AG04450 (cell line): ENCODE measurements at regions of chr17 and their contacts with region 1.

Region 1: GRCh38 chr17:75109407-75110233 is at the start of gene ARMC7:
- DNase-seq: peak; percentile 49
- H3K4me3 ChIP-seq: peak within 1 kb of the TSS; percentile 80
- H3K27ac ChIP-seq: no peak within 1 kb of the TSS
- H3K27me3 ChIP-seq: peaks cover 7% of the 10 kb centered on the region
- CTCF ChIP-seq: no peak
- polyA plus RNA-seq, gene ARMC7: 5.6 and 6.5 TPM in 2 replicates

Region 2: GRCh38 chr17:75069783-75070182 is 39.8 kb before region 1 on chr17:
- CTCF ChIA-PET with region 1: interaction called, 18 read pairs
- POLR2A ChIA-PET with region 1: interaction called, 4 read pairs
- DNase-seq: no peak
- H3K4me3 ChIP-seq: no peak overlapping the region
- H3K27ac ChIP-seq: no peak overlapping the region
- H3K27me3 ChIP-seq: no peaks in the 10 kb centered on the region
- CTCF ChIP-seq: peak; percentile 47

Region 3: DNA sequence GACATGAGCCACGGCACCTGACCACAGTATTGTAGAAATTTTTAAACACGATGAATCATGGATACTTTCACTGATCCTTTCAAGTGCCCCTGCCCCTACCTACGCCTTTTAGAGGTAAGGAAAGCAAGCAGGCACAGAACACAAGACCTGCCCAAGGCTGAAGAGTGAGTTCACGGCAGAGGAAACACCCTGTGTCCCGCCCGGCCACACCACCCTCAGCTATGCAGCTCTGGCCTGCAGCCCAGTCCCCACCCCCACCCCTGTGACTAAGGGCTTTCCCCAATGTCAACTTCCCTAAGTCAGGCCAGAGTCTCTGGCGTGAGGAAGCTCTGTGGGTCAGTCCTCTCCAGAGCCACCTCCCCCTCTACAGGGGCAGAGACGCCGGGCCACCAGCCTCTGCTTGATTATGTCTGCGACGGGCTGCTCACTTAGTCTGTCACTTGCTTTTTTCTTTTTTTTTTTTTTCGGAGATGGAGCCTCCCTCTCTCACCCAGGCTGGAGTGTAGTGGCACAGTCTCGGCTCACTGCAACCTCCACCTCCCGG is 13.5 kb before region 1 on chr17:
- CTCF ChIA-PET with region 1: interaction called, 13 read pairs
- POLR2A ChIA-PET with region 1: interaction called, 4 read pairs
- DNase-seq: no peak
- H3K4me3 ChIP-seq: no peak overlapping the region
- H3K27ac ChIP-seq: peak overlapping the region; percentile 21
- H3K27me3 ChIP-seq: no peaks in the 10 kb centered on the region
- CTCF ChIP-seq: no peak

Region 4: GRCh38 chr17:75131280-75132017 is 21.8 kb after region 1 on chr17 and contains the start of gene NT5C:
- CTCF ChIA-PET with region 1: interaction called, 67 read pairs
- POLR2A ChIA-PET with region 1: interaction called, 12 read pairs
- DNase-seq: peak; percentile 33
- H3K4me3 ChIP-seq: peak within 1 kb of the TSS; percentile 75
- H3K27ac ChIP-seq: peak within 1 kb of the TSS; percentile 87
- H3K27me3 ChIP-seq: no peaks in the 10 kb centered on the region
- CTCF ChIP-seq: peak; percentile 62
- polyA plus RNA-seq, gene NT5C: 22.6 and 27.9 TPM in 2 replicates

Region 5: GRCh38 chr17:75173526-75173925 is 63.9 kb after region 1 on chr17:
- CTCF ChIA-PET with region 1: interaction called, 72 read pairs
- POLR2A ChIA-PET with region 1: interaction called, 5 read pairs
- DNase-seq: no peak
- H3K4me3 ChIP-seq: no peak overlapping the region
- H3K27ac ChIP-seq: no peak overlapping the region
- H3K27me3 ChIP-seq: no peaks in the 10 kb centered on the region
- CTCF ChIP-seq: no peak

Region 6: GRCh38 chr17:75271233-75271954 is 161.8 kb after region 1 on chr17:
- CTCF ChIA-PET with region 1: interaction called, 22 read pairs
- POLR2A ChIA-PET with region 1: no interaction called
- DNase-seq: no peak
- H3K4me3 ChIP-seq: peak overlapping the region; percentile 68
- H3K27ac ChIP-seq: no peak overlapping the region
- H3K27me3 ChIP-seq: no peaks in the 10 kb centered on the region
- CTCF ChIP-seq: peak; percentile 44